CD4-positive, alpha-beta memory T cell (primary cell): ENCODE measurements at regions of chr19 and their contacts with region 1.

Region 1: GRCh38 chr19:40425450-40426287 is at the start of gene SERTAD1:
- DNase-seq: peak; percentile 100
- H3K4me3 ChIP-seq: peak within 1 kb of the TSS; percentile 79 to 85
- H3K4me3 Mint-ChIP-seq: peak within 1 kb of the TSS; percentile 92 to 99 (median 95)
- H3K27ac ChIP-seq: peak within 1 kb of the TSS; percentile 92
- H3K27ac Mint-ChIP-seq: peak within 1 kb of the TSS; percentile 97 to 99 (median 98)
- H3K4me1 ChIP-seq: peaks cover 28% of the 10 kb centered on the region
- H3K4me1 Mint-ChIP-seq: peaks cover 11 to 34% (median 22%) of the 10 kb centered on the region in 4 donors
- H3K27me3 ChIP-seq: no peaks in the 10 kb centered on the region
- H3K27me3 Mint-ChIP-seq: peaks cover 0 to 2% of the 10 kb centered on the region in 2 donors
- total RNA-seq, gene SERTAD1: 10.6 to 11.3 TPM

Region 2: DNA sequence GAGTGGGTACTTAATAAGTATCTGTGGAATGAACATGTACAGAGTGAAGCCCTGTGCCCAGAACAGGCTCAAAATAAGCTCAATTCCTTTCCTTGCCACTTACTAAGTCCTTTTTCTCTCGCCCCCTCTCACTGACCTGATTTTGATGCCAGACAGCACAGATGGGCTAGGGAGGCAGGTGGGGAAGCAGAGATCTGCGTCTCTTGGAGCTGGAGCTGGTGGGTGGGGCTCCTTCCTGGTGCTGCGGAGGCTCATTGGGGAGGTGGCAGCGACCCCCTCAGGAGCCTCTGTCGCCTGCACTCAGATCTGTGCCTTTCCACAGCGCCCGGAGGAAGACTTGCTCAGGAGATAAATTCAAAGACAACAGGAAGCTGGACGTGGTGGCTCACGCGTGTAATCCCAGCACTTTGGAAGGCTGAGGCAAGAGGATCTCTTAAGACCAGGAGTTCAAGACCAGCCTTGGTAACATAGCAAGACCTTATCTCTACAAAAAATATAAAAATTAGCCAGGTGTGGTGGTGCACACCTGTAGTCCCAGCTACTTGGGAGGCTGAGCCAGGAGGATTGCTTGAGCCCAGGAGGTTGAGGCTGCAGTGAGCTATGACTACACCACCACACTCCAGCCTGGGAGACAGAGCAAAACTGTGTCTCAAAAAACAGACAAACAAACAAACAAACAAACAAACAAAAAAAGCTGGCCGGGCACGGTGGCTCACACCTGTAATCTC is 155.1 kb before region 1 on chr19:
- CTCF ChIA-PET with region 1: no interaction called
- POLR2A ChIA-PET with region 1: no interaction called
- intact Hi-C with region 1: no loop called
- DNase-seq: no peak
- H3K4me3 ChIP-seq: no peak overlapping the region
- H3K4me3 Mint-ChIP-seq: no peak overlapping the region
- H3K27ac ChIP-seq: no peak overlapping the region
- H3K27ac Mint-ChIP-seq: no peak overlapping the region
- H3K4me1 ChIP-seq: peaks cover 29% of the 10 kb centered on the region
- H3K4me1 Mint-ChIP-seq: peaks cover 38 to 62% (median 50%) of the 10 kb centered on the region in 4 donors
- H3K27me3 ChIP-seq: no peaks in the 10 kb centered on the region
- H3K27me3 Mint-ChIP-seq: no peaks in the 10 kb centered on the region

Region 3: DNA sequence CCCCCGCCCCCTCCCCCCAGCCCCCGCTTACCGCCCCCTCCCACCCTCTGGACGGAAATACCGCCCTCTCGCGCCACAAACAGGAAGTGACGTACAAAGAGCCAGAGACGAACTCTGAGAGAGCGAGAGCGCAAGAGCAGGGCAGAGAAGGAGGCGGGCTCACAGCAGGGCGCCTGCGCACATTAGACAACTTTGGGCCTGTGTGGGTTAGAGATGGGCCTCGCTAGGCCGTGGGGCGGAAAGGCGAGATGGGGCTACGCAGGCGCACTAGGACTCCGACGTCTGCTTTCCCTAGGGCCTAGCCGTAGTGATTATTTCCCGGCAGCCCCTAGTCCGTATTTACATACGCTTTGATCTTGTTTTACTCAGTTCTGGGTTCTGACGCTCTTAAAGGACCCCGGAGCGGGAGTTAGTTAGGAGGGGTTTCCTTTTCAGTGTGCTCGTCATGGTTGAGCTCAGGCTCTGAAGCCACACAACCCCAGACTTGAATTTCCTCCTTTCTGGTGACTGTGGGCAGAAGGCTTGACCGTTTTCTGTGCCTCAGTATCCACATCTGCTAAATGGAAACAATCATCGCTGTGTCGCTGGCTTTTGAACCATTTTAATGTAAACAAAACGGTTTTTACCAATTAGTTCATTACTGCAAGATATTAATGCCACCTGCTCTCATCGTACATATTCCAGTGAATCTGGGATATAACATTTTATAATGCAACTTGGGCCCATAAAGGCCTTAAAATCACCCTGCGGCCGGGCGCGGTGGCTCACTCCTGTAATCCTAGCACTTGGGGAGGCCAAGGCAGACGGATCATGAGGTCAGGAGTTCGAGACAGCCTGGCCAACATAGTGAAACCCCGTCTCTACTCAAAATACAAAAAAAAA is 140.1 kb before region 1 on chr19:
- CTCF ChIA-PET with region 1: interaction called, 4 read pairs
- POLR2A ChIA-PET with region 1: interaction called, 5 read pairs
- intact Hi-C with region 1: loop called (anchors 10 kb)
- DNase-seq: peak; percentile 97 to 100 (median 100)
- H3K4me3 ChIP-seq: peak overlapping the region; percentile 45 to 58
- H3K4me3 Mint-ChIP-seq: peak overlapping the region; percentile 84 to 98 (median 92)
- H3K27ac ChIP-seq: peak overlapping the region; percentile 88
- H3K27ac Mint-ChIP-seq: peak overlapping the region; percentile 93 to 99 (median 98)
- H3K4me1 ChIP-seq: peaks cover 49% of the 10 kb centered on the region
- H3K4me1 Mint-ChIP-seq: peaks cover 26 to 56% (median 40%) of the 10 kb centered on the region in 4 donors
- H3K27me3 ChIP-seq: no peaks in the 10 kb centered on the region
- H3K27me3 Mint-ChIP-seq: no peaks in the 10 kb centered on the region

Region 4: GRCh38 chr19:40348125-40348913 is 77.3 kb before region 1 on chr19 and contains the starts of genes C19orf47 and PLD3:
- CTCF ChIA-PET with region 1: interaction called, 4 read pairs
- POLR2A ChIA-PET with region 1: interaction called, 14 read pairs
- intact Hi-C with region 1: loop called (anchors 1 kb)
- DNase-seq: peak; percentile 97 to 99 (median 99)
- H3K4me3 ChIP-seq: peak within 1 kb of the TSS; percentile 48 to 73
- H3K4me3 Mint-ChIP-seq: peak within 1 kb of the TSS; percentile 85 to 99 (median 94)
- H3K27ac ChIP-seq: peak within 1 kb of the TSS; percentile 84
- H3K27ac Mint-ChIP-seq: peak within 1 kb of the TSS; percentile 86 to 99 (median 95)
- H3K4me1 ChIP-seq: peaks cover 19% of the 10 kb centered on the region
- H3K4me1 Mint-ChIP-seq: peaks cover 27 to 44% (median 33%) of the 10 kb centered on the region in 4 donors
- H3K27me3 ChIP-seq: no peaks in the 10 kb centered on the region
- H3K27me3 Mint-ChIP-seq: no peaks in the 10 kb centered on the region
- total RNA-seq, gene C19orf47: 13.7 to 17.7 TPM
- total RNA-seq, gene PLD3: 116 to 117 TPM

Region 5: GRCh38 chr19:40403262-40403984 is 22.2 kb before region 1 on chr19:
- CTCF ChIA-PET with region 1: interaction called, 28 read pairs
- POLR2A ChIA-PET with region 1: interaction called, 26 read pairs
- intact Hi-C with region 1: loop called (anchors 1 kb)
- DNase-seq: peak; percentile 61 to 80 (median 64)
- H3K4me3 ChIP-seq: peak overlapping the region; percentile 59 to 69
- H3K4me3 Mint-ChIP-seq: peak overlapping the region; percentile 86 to 99 (median 96)
- H3K27ac ChIP-seq: peak overlapping the region; percentile 43
- H3K27ac Mint-ChIP-seq: peak overlapping the region; percentile 46 to 95 (median 90)
- H3K4me1 ChIP-seq: peaks cover 18% of the 10 kb centered on the region
- H3K4me1 Mint-ChIP-seq: peaks cover 22 to 38% (median 29%) of the 10 kb centered on the region in 4 donors
- H3K27me3 ChIP-seq: no peaks in the 10 kb centered on the region
- H3K27me3 Mint-ChIP-seq: no peaks in the 10 kb centered on the region

Region 6: DNA sequence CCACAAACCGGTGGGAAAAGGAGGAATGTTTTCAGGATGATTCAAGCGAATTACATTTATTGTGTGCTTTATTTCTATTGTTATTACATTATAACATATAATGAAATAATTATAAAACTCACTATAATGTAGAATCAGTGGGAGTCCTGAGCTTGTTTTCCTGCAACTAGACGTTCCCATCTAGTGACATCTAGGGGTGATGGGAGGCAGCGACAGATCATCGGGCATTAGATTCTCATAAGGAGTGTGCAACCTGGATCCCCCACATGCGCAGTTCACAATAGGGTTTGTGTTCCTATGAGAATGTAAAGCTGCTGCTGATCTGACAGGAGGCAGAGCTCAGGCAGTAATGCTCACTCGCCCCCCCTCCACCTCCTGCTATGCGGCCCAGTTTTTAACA is 95.6 kb after region 1 on chr19:
- CTCF ChIA-PET with region 1: interaction called, 5 read pairs
- POLR2A ChIA-PET with region 1: interaction called, 3 read pairs
- intact Hi-C with region 1: loop called (anchors 2 kb)
- DNase-seq: no peak
- H3K4me3 ChIP-seq: no peak overlapping the region
- H3K4me3 Mint-ChIP-seq: no peak overlapping the region
- H3K27ac ChIP-seq: no peak overlapping the region
- H3K27ac Mint-ChIP-seq: no peak overlapping the region
- H3K4me1 ChIP-seq: no peaks in the 10 kb centered on the region
- H3K4me1 Mint-ChIP-seq: peaks cover 1 to 6% (median 5%) of the 10 kb centered on the region in 4 donors
- H3K27me3 ChIP-seq: no peaks in the 10 kb centered on the region
- H3K27me3 Mint-ChIP-seq: peaks cover 14 to 31% of the 10 kb centered on the region in 2 donors

Region 7: DNA sequence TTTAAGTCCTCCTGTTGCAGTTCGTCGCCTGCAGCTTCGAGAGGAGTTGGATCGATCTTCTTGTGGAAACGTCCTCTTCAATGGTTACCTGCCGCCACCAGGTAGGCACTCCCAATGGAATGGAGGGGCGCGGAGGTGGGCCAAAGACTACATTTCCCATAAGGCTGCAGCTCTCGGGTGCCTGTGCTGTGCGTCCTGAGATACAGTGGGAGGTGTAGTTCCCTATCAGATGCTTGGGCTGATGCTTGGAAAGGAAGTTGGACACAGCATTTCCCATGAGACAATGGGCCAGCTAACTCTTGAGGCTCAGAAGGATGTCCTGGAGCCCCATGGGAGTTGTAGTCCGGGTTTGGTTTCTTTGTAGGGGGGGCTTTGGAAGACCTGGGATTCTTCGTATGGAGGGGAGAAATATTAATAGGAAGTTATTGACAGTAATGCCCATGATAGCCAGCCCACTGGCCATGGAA is 152.8 kb after region 1 on chr19:
- CTCF ChIA-PET with region 1: no interaction called
- POLR2A ChIA-PET with region 1: no interaction called
- intact Hi-C with region 1: no loop called
- DNase-seq: no peak
- H3K4me3 ChIP-seq: peak overlapping the region in 1 of 2 donors; percentile 2
- H3K4me3 Mint-ChIP-seq: peak overlapping the region; percentile 74 to 94 (median 90)
- H3K27ac ChIP-seq: no peak overlapping the region
- H3K27ac Mint-ChIP-seq: peak overlapping the region in 5 of 7 donors; percentile 37 to 86 (median 78)
- H3K4me1 ChIP-seq: peaks cover 23% of the 10 kb centered on the region
- H3K4me1 Mint-ChIP-seq: peaks cover 17 to 35% (median 24%) of the 10 kb centered on the region in 4 donors
- H3K27me3 ChIP-seq: no peaks in the 10 kb centered on the region
- H3K27me3 Mint-ChIP-seq: no peaks in the 10 kb centered on the region